GM10248 (cell line): ENCODE measurements at regions of chr22 and their contacts with region 1.

Region 1: GRCh38 chr22:24423519-24424000 is 3.8 kb upstream of the ADORA2A start:
- DNase-seq: peak; percentile 90
- CTCF ChIP-seq: peak; percentile 86

Region 2: DNA sequence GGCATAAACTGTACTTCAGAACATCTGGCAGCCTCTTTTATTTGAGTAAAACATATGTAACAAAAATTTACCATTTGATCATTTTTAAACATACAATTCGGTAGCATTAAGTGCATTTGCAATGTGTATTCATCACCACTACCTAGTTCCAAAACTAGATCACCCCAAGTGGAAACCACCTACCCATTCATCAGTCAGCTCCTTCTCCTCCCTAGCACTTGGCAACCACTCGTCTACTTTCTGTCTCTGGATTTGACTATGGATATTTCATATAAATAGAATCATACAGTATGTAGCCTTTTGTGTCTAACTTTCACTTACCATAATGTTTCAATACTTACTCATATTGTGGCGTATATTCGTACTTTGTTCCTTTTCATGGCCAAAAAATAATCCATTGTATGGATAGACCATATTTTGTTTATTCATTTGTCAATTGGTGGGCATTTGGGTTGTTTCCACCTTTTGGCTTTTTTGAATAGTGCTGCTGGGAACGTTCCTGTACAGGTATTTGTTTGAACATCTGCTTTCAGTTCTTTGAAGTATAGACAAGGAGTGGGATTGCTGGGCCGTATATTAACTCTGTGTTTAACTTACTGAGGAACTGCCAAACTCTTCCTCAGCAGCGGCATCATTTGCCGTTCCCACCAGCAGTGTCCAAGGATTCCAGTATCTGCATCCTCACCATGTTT is 23.4 kb before region 1 on chr22:
- CTCF ChIA-PET with region 1: interaction called, 10 read pairs
- POLR2A ChIA-PET with region 1: no interaction called
- DNase-seq: peak; percentile 17
- CTCF ChIP-seq: no peak

Region 3: GRCh38 chr22:24433813-24434470 is 10.4 kb after region 1 on chr22:
- CTCF ChIA-PET with region 1: interaction called, 17 read pairs
- POLR2A ChIA-PET with region 1: interaction called, 6 read pairs
- DNase-seq: peak; percentile 86
- CTCF ChIP-seq: no peak

Region 4: DNA sequence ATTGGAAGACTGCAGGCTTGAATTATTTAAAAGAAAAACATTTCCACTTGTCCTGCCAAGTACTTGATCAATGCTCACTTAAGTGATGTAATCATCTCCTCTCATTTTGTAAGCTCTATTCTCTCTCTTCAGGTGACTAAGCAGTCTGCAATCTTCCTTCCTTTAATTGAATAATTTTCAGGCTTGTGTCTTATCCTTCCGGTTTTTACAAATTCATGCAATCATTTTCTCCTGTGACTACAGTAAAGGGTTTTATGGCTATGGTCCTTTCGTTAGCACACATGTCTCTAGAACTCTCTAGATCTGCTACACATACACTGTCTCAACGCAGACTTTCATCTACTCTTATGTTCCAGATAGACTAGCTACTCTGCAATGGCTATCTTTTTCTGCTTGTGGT is 59.0 kb after region 1 on chr22:
- CTCF ChIA-PET with region 1: interaction called, 11 read pairs
- POLR2A ChIA-PET with region 1: no interaction called
- DNase-seq: no peak
- CTCF ChIP-seq: no peak

Region 5: DNA sequence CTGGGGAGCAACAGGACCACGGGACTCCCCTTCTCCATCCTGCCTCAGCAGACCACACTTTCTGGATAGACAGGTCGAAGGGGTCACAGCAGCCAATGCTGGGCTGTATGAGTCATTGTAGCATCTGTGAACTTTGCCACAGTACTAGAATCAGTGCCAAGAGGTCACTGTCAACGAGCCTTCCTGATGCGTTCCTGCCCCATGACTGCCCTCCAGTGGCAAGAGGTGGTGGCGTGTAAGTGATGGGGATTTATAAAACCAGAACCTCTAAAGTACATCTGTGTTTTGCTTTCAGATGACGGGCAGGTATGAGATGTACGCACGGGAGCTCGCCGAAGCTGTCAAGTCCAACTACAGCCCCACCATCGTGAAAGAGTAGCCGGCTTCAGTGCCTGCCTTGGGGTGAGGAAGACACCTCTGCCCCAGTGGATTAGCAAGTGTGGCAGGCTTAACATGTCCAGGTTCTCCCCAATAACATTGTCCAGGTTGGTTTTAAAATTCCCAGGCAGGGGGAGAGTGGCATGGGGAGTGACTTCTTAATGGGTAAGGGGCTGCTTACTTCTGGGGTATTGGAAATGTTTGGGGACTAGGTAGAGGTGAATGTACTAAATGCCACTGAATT is 102.0 kb after region 1 on chr22:
- CTCF ChIA-PET with region 1: interaction called, 36 read pairs
- POLR2A ChIA-PET with region 1: no interaction called
- DNase-seq: peak; percentile 85
- CTCF ChIP-seq: peak; percentile 90